A549 (cell line): ENCODE measurements at regions of chr19 and their contacts with region 1.

Region 1: DNA sequence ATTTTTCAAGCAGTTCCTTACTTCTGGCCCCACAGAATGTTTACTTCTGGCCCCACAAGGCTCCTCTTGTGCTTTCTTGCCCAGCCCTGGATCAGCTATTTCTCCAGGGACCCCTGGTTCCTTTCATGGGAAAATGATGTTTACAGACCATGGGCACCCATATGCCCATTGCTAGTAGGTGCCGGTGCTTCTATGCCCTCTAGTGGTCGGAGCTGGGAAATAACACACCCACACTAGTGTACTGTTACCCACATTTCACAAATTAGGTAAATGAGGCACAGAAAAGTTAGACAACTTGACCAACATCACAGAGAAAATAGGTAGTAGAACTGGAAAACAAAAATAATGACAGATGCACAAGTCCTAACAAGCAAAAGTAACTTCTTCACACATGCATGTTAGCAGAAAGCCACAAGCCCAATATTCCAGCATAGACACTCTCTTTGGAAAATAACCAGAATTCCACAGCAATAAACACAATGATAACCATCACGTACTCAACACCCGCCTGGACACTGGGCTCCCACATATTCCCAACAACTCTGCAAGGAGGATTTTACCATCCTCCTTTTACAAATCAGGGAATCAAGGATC is 1.3 kb upstream of the CEACAM6 start:
- DNase-seq: peak; percentile 47 to 69
- ATAC-seq: peak; percentile 61 to 91; a peak in 5 of 6 replicates
- H3K4me3 ChIP-seq: no peak overlapping the region
- H3K27ac ChIP-seq: no peak overlapping the region
- H3K4me1 ChIP-seq: no peaks in the 10 kb centered on the region
- CTCF ChIP-seq: peak; percentile 87
- EP300 ChIP-seq: no peak
- POLR2A ChIP-seq: no peak
- RAD21 ChIP-seq: peak; percentile 45 to 66

Region 2: DNA sequence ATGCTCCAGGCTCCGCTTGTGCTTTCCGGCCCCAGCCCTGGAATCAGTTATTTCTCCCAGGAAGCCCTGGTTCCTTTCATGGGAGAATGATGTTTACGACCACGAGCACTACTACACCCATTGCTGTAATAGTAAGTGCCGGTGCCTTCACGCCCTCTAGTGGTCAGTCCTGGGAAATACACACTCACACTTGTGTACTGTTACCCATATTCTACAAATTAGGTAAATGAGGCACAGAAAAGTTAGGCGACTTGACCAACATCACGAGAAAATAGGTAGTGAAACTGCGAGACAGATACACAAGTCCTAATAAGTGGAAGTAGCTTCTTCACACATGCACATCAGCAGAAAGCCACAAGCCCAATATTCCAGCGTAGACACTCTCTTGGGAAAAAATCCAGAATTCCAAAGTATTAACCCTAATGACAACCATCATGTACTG is 156.4 kb before region 1 on chr19:
- CTCF ChIA-PET with region 1: interaction called, 26 read pairs
- POLR2A ChIA-PET with region 1: no interaction called
- DNase-seq: peak; percentile 85 to 99
- ATAC-seq: peak; percentile 70 to 90; a peak in 5 of 6 replicates
- H3K4me3 ChIP-seq: no peak overlapping the region
- H3K27ac ChIP-seq: no peak overlapping the region
- H3K4me1 ChIP-seq: no peaks in the 10 kb centered on the region
- CTCF ChIP-seq: peak; percentile 99
- EP300 ChIP-seq: no peak
- POLR2A ChIP-seq: no peak
- RAD21 ChIP-seq: peak; percentile 44 to 54; a peak in 3 of 5 replicates

Region 3: DNA sequence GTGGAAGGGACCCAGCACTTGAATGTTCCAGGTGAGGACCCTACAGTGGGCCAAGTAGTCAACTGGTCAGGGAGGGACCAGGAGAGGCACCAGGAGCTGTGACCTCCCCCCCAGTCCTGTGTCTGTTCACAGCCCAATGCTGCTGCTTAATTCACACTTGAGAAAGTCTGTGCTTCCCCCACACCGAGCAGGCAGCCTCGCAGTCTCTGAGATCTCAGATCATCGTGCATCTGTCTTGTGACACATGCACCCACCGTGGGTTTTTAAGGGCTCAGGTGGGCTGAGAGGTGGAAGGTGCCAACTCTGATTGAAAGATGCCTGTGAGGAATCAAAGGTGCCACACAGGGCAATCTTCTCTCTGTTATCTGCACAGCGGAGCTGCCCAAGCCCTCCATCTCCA is 39.4 kb before region 1 on chr19:
- CTCF ChIA-PET with region 1: interaction called, 16 read pairs
- POLR2A ChIA-PET with region 1: no interaction called
- DNase-seq: no peak
- ATAC-seq: no peak
- H3K4me3 ChIP-seq: no peak overlapping the region
- H3K27ac ChIP-seq: no peak overlapping the region
- H3K4me1 ChIP-seq: no peaks in the 10 kb centered on the region
- CTCF ChIP-seq: no peak
- EP300 ChIP-seq: no peak
- POLR2A ChIP-seq: no peak
- RAD21 ChIP-seq: no peak

Region 4: GRCh38 chr19:41767115-41767514 is 13.1 kb after region 1 on chr19:
- CTCF ChIA-PET with region 1: interaction called, 474 read pairs
- POLR2A ChIA-PET with region 1: no interaction called
- DNase-seq: no peak
- ATAC-seq: no peak
- H3K4me3 ChIP-seq: no peak overlapping the region
- H3K27ac ChIP-seq: no peak overlapping the region
- H3K4me1 ChIP-seq: no peaks in the 10 kb centered on the region
- CTCF ChIP-seq: no peak
- EP300 ChIP-seq: no peak
- POLR2A ChIP-seq: no peak
- RAD21 ChIP-seq: no peak

Region 5: GRCh38 chr19:41801792-41802211 is 47.8 kb after region 1 on chr19:
- CTCF ChIA-PET with region 1: interaction called, 24 read pairs
- POLR2A ChIA-PET with region 1: no interaction called
- DNase-seq: no peak
- ATAC-seq: no peak
- H3K4me3 ChIP-seq: no peak overlapping the region
- H3K27ac ChIP-seq: no peak overlapping the region
- H3K4me1 ChIP-seq: 0 out of 3 replicates have a peak, but pooled peaks cover 5% of the 10 kb centered on the region
- CTCF ChIP-seq: no peak
- EP300 ChIP-seq: no peak
- POLR2A ChIP-seq: no peak
- RAD21 ChIP-seq: no peak

Region 6: DNA sequence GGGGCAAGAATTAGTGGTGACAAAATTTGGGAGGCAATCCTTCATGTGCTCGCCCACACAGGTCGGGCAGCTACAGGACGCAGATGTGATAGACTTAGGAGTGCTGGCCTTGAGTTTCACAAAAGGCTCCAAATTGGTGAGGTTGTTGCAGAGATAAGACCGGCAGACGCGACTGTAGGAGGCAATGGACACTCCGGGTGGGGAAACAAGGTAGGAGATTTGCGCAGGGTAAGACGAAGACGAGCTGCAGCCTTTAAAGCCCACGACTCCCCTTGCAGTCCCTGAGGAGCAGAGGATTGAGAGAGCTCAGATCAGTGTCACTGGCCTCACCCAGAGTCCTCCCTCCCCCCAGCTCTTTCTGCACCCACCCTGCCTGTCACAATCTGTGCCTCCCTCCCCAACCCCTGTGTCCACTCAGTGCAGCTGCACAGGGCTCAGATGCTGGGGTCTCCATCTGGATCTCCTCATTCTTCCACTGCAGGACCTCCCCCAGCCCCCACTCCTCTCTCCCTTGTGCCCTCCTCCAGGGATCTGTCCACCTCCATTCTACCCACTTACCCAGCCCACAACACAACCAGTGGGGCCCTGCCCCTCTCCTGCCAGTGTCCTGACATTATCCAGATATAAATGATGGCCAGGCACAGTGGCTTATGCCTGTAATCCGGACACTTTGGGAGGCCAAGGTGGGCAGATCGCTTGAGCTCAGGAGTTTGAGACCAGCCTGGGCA is 84.1 kb after region 1 on chr19:
- CTCF ChIA-PET with region 1: interaction called, 29 read pairs
- POLR2A ChIA-PET with region 1: no interaction called
- DNase-seq: no peak
- ATAC-seq: peak; percentile 7 to 20; a peak in 4 of 6 replicates
- H3K4me3 ChIP-seq: no peak overlapping the region
- H3K27ac ChIP-seq: no peak overlapping the region
- H3K4me1 ChIP-seq: no peaks in the 10 kb centered on the region
- CTCF ChIP-seq: no peak
- EP300 ChIP-seq: no peak
- POLR2A ChIP-seq: no peak
- RAD21 ChIP-seq: no peak